Naive thymus-derived CD8-positive, alpha-beta T cell (primary cell): ENCODE measurements at regions of chr7 and their contacts with region 1.

Region 1: GRCh38 chr7:143408686-143409561 is at the start of gene EPHA1:
- DNase-seq: peak; percentile 34 to 78 (median 56)
- ATAC-seq: peak; percentile 73 to 78
- H3K4me3 Mint-ChIP-seq: peak within 1 kb of the TSS; percentile 93 to 99 (median 94)
- H3K27ac Mint-ChIP-seq: peak within 1 kb of the TSS; percentile 89 to 99 (median 95)
- H3K4me1 Mint-ChIP-seq: peaks cover 59 to 88% (median 80%) of the 10 kb centered on the region in 4 donors
- H3K27me3 Mint-ChIP-seq: peaks cover 0 to 11% (median 0%) of the 10 kb centered on the region in 5 donors
- polyA plus RNA-seq, gene EPHA1: 10.1 to 37.1 (median 16.2) TPM

Region 2: GRCh38 chr7:143188994-143189393 is 219.9 kb before region 1 on chr7:
- POLR2A ChIA-PET with region 1: no interaction called
- DNase-seq: no peak
- ATAC-seq: no peak
- H3K4me3 Mint-ChIP-seq: no peak overlapping the region
- H3K27ac Mint-ChIP-seq: no peak overlapping the region
- H3K4me1 Mint-ChIP-seq: no peaks in the 10 kb centered on the region
- H3K27me3 Mint-ChIP-seq: peaks cover 7 to 26% (median 9%) of the 10 kb centered on the region in 5 donors

Region 3: GRCh38 chr7:143248761-143249354 is 160.1 kb before region 1 on chr7:
- POLR2A ChIA-PET with region 1: interaction called, 11 read pairs
- DNase-seq: no peak
- ATAC-seq: no peak
- H3K4me3 Mint-ChIP-seq: peak overlapping the region in 4 of 10 donors; percentile 20 to 58 (median 46)
- H3K27ac Mint-ChIP-seq: peak overlapping the region in 8 of 10 donors; percentile 41 to 89 (median 67)
- H3K4me1 Mint-ChIP-seq: peaks cover 47 to 88% (median 85%) of the 10 kb centered on the region in 4 donors
- H3K27me3 Mint-ChIP-seq: no peaks in the 10 kb centered on the region

Region 4: DNA sequence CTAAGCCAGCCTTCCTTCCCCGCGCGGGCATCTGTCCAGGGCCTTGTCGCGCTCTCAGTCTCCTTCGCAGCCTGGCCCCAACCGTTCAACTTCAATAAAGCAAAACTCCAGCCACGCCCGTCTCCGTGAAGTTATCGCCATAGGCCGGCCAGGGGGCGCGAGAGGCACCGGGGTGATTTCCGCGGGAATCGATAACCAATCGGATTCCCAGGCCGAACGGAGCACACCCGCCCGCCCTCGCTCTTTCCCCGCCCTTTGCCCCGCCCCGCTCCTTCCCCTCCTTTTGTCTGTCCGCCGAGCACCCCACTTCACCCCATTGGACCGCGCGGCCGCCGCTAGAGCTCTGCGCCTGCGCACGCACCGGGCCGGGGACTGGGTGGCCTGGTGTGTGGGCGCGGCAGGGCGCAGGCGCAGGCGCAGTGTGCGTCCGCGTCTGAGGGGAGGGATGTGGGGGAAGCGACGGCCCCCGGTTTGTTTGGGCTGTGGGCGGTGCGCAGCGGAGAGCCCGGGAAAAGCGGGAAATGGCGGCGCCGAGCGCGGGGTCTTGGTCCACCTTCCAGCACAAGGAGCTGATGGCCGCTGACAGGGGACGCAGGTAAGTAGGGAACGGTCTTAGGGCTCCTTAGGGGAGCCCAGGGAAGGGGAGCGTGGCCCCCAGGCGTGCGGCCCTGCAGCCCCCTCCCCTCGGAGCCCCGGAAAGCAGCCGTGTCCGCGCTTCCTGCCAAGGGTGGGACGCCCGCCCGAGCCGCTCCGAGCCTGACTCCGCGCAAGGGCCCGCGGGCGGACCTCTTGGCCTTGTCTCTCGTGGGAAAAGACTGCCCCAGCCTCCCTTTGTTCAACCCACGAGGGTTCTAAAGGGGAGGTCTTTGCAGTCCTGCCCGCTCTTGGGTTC is 120.7 kb before region 1 on chr7 and contains the start of gene CASP2:
- POLR2A ChIA-PET with region 1: interaction called, 11 read pairs
- DNase-seq: peak; percentile 93 to 100 (median 99)
- ATAC-seq: peak; percentile 92 to 94
- H3K4me3 Mint-ChIP-seq: peak within 1 kb of the TSS; percentile 91 to 98 (median 96)
- H3K27ac Mint-ChIP-seq: peak within 1 kb of the TSS; percentile 89 to 98 (median 92)
- H3K4me1 Mint-ChIP-seq: peaks cover 32 to 62% (median 59%) of the 10 kb centered on the region in 4 donors
- H3K27me3 Mint-ChIP-seq: no peaks in the 10 kb centered on the region
- polyA plus RNA-seq, gene CASP2: 12.1 to 22.0 (median 14.6) TPM

Region 5: DNA sequence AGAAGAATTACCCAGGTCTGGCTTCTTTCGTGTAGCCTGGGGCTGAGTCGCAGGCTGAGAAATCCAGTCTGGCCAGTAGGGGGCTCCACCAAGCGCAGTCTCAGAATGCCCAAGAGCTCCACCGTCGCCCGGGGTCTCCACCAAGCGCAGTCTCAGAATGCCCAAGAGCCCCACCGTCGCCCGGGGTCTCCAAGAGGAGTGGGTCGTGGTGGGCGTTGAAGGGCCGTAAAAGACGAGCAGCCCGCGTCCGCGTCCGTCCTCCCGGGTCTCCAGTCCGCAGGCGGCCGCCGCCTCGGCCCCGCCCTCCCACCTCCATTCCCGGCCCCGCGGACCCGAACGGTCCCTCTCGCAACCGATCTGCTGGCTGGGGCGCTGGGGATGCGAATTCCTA is 28.7 kb before region 1 on chr7:
- POLR2A ChIA-PET with region 1: interaction called, 184 read pairs
- DNase-seq: peak; percentile 75 to 92 (median 85)
- ATAC-seq: peak; percentile 52 to 59
- H3K4me3 Mint-ChIP-seq: peak overlapping the region in 9 of 10 donors; percentile 88 to 95 (median 92)
- H3K27ac Mint-ChIP-seq: peak overlapping the region; percentile 91 to 99 (median 94)
- H3K4me1 Mint-ChIP-seq: peaks cover 34 to 58% (median 44%) of the 10 kb centered on the region in 4 donors
- H3K27me3 Mint-ChIP-seq: no peaks in the 10 kb centered on the region

Region 6: GRCh38 chr7:143391462-143392404 is 17.2 kb before region 1 on chr7:
- POLR2A ChIA-PET with region 1: interaction called, 91 read pairs
- DNase-seq: no peak
- ATAC-seq: no peak
- H3K4me3 Mint-ChIP-seq: no peak overlapping the region
- H3K27ac Mint-ChIP-seq: peak overlapping the region in 6 of 10 donors; percentile 17 to 75 (median 46)
- H3K4me1 Mint-ChIP-seq: peaks cover 14 to 49% (median 26%) of the 10 kb centered on the region in 4 donors
- H3K27me3 Mint-ChIP-seq: no peaks in the 10 kb centered on the region